CD8-positive, alpha-beta memory T cell (primary cell): ENCODE measurements at regions of chr4 and their contacts with region 1.

Region 1: DNA sequence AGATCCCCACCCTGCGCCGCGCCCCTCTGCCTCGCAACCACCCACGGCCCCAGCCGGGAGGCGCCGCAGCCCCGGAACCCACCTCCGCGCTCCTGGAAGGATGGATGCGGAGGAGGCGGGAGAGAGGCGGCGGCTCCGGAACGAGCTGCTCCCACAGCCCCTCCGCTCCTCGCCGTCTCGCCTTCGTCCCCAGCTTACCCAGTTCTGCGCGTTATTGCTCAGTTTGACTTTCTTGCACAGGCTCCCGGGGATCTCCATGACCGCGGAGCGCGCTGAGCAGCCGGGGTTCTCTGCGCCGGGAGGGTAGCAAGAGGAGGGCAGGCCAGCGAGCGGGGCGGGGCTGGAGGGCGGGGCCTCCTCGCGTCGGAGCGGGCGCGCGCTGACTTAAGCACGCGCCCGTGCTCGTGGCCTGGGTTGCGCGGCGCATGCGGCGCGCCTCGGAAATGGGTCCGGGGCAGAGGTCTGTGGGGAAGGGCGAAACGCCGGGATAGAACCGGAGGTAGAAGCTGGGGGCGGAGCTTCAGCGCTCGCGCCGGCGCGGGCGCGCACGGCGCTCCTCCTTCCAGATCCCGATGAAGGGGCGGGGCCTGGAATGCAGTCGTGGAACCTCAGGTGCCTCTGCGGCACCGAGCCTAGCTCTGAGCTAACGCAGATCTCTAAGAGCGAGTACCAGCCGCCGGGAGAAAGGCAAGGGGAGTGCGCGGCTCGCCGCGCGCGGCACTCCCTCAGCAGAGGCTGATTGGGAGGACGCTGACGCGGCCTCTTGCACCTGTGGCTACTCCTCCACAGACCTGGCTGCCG is at the start of gene PAPSS1:
- DNase-seq: peak; percentile 94 to 97 (median 94)
- H3K4me3 ChIP-seq: peak within 1 kb of the TSS; percentile 96
- H3K4me3 Mint-ChIP-seq: peak within 1 kb of the TSS; percentile 96 to 99 (median 97)
- H3K27ac ChIP-seq: peak within 1 kb of the TSS; percentile 74
- H3K27ac Mint-ChIP-seq: peak within 1 kb of the TSS; percentile 94 to 97 (median 96)
- H3K4me1 ChIP-seq: peaks cover 20% of the 10 kb centered on the region
- H3K4me1 Mint-ChIP-seq: peaks cover 33 to 39% (median 33%) of the 10 kb centered on the region in 3 donors
- H3K27me3 ChIP-seq: no peaks in the 10 kb centered on the region
- H3K27me3 Mint-ChIP-seq: no peaks in the 10 kb centered on the region
- total RNA-seq, gene PAPSS1: 26.6 to 27.9 TPM

Region 2: GRCh38 chr4:107736924-107737448 is 16.9 kb after region 1 on chr4:
- CTCF ChIA-PET with region 1: interaction called, 17 read pairs
- POLR2A ChIA-PET with region 1: no interaction called
- DNase-seq: peak in 4 of 5 donors; percentile 27 to 61 (median 38)
- H3K4me3 ChIP-seq: no peak overlapping the region
- H3K4me3 Mint-ChIP-seq: no peak overlapping the region
- H3K27ac ChIP-seq: no peak overlapping the region
- H3K27ac Mint-ChIP-seq: no peak overlapping the region
- H3K4me1 ChIP-seq: no peaks in the 10 kb centered on the region
- H3K4me1 Mint-ChIP-seq: no peaks in the 10 kb centered on the region
- H3K27me3 ChIP-seq: no peaks in the 10 kb centered on the region
- H3K27me3 Mint-ChIP-seq: no peaks in the 10 kb centered on the region

Region 3: DNA sequence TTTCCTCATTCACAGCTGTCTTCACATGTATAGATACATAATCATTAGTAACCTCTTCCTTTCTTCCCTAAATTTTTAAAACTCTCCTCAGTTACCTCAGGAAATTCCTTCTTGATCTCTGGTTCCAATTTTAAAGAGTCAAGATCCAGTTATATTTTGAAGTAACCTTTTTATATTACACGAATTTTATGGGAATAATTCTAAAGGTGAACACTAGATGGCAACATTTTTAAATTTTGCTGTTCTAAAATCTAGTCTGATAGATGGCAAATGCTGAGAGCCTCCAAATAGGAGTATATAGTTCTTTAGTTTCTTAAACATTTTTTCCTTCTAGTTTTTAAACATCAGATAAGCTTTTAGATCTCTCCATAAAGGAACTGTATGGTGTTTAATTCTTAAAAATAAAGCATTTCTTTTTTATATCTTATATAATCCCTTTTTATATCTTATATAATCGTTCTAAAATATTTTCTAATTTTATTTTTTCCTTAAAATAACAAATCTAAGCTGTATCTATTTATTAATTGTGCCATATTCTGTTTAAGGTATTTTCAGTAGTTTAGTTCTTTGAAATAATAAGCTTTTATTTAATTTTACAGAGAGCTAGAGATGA is 37.8 kb after region 1 on chr4:
- CTCF ChIA-PET with region 1: interaction called, 10 read pairs
- POLR2A ChIA-PET with region 1: no interaction called
- DNase-seq: peak in 2 of 5 donors; percentile 13 to 17
- H3K4me3 ChIP-seq: no peak overlapping the region
- H3K4me3 Mint-ChIP-seq: no peak overlapping the region
- H3K27ac ChIP-seq: no peak overlapping the region
- H3K27ac Mint-ChIP-seq: no peak overlapping the region
- H3K4me1 ChIP-seq: no peaks in the 10 kb centered on the region
- H3K4me1 Mint-ChIP-seq: no peaks in the 10 kb centered on the region
- H3K27me3 ChIP-seq: no peaks in the 10 kb centered on the region
- H3K27me3 Mint-ChIP-seq: peaks cover 5 to 11% of the 10 kb centered on the region in 2 donors